CD4-positive, alpha-beta T cell (primary cell): ENCODE measurements at regions of chr20 and their contacts with region 1.

Region 1: GRCh38 chr20:21505161-21505809 is 8.6 kb downstream of the NKX2-2 start:
- DNase-seq: peak; percentile 63 to 87 (median 76)
- ATAC-seq: peak; percentile 75
- H3K4me3 ChIP-seq: peak overlapping the region; percentile 48
- H3K4me3 Mint-ChIP-seq: peak overlapping the region; percentile 82
- H3K27ac ChIP-seq: no peak overlapping the region
- H3K27ac Mint-ChIP-seq: no peak overlapping the region
- H3K4me1 ChIP-seq: peaks cover 31% of the 10 kb centered on the region
- H3K4me1 Mint-ChIP-seq: peaks cover 39% of the 10 kb centered on the region
- H3K27me3 ChIP-seq: peaks cover 54 to 62% of the 10 kb centered on the region in 2 experiments
- H3K27me3 Mint-ChIP-seq: peaks cover 80% of the 10 kb centered on the region
- CTCF ChIP-seq: peak; percentile 94

Region 2: DNA sequence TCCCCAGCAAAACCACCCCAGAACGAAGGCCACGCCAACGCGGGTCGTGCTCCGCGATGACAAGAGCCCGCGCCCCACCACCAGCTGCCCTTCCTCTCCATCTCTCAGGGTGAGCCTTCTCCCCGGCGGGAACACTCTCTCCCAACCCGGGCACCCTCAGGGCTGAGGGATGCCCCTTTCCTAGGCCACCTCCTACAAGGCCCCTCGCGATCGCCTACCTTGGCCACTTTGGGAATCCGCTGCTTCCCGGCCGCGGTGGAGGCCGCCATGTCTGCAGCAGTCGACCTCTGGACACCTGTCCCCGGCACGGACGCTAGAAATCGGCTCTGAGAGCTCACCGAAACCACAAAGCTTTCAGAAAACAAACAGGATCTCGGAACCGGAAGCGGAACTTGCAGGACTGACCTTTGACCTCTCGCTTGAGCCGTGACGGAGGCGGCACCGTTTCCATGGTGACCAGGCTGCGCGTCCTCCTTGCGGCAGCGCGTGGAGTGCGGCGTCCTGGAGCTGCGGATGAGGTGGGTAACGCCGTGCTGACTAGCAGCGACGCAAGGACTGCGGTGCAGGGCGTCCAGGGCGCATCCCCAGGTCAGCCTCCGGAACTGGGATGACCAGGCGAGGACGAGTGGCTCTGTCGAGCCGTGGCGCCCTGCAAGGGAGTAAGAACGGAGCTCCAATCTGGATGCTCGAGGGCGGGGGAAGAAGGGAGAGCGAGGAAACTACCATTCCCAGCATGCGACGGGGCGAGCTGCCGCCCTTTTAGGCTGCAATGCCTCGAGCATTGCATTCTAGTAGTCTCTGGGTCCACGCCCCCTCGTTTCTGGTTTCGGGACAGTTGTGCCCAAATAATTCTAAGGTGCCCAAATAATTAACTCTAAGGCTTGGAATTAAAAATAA is 1453.0 kb before region 1 on chr20 and contains the starts of genes CFAP61 and CRNKL1:
- CTCF ChIA-PET with region 1: no interaction called
- POLR2A ChIA-PET with region 1: no interaction called
- intact Hi-C with region 1: no loop called
- DNase-seq: peak; percentile 94 to 100 (median 97)
- ATAC-seq: peak; percentile 93
- H3K4me3 ChIP-seq: peak within 1 kb of the TSS; percentile 91
- H3K4me3 Mint-ChIP-seq: peak within 1 kb of the TSS; percentile 98
- H3K27ac ChIP-seq: peak within 1 kb of the TSS; percentile 80 to 91
- H3K27ac Mint-ChIP-seq: peak within 1 kb of the TSS; percentile 89
- H3K4me1 ChIP-seq: peaks cover 7% of the 10 kb centered on the region
- H3K4me1 Mint-ChIP-seq: peaks cover 37% of the 10 kb centered on the region
- H3K27me3 ChIP-seq: no peaks in the 10 kb centered on the region
- H3K27me3 Mint-ChIP-seq: peaks cover 6% of the 10 kb centered on the region
- CTCF ChIP-seq: no peak
- total RNA-seq, gene CFAP61: not detected
- total RNA-seq, gene CRNKL1: 24.3 to 26.1 TPM

Region 3: GRCh38 chr20:20083807-20084206 is 1421.5 kb before region 1 on chr20:
- CTCF ChIA-PET with region 1: no interaction called
- POLR2A ChIA-PET with region 1: no interaction called
- intact Hi-C with region 1: loop called in 1 of 2 experiments (anchors 5 kb)
- DNase-seq: peak in 3 of 14 experiments; percentile 20 to 54 (median 52)
- ATAC-seq: peak; percentile 24
- H3K4me3 ChIP-seq: no peak overlapping the region
- H3K4me3 Mint-ChIP-seq: no peak overlapping the region
- H3K27ac ChIP-seq: no peak overlapping the region
- H3K27ac Mint-ChIP-seq: no peak overlapping the region
- H3K4me1 ChIP-seq: no peaks in the 10 kb centered on the region
- H3K4me1 Mint-ChIP-seq: peaks cover 5% of the 10 kb centered on the region
- H3K27me3 ChIP-seq: peaks cover 0 to 5% of the 10 kb centered on the region in 2 experiments
- H3K27me3 Mint-ChIP-seq: peaks cover 19% of the 10 kb centered on the region
- CTCF ChIP-seq: peak; percentile 71

Region 4: DNA sequence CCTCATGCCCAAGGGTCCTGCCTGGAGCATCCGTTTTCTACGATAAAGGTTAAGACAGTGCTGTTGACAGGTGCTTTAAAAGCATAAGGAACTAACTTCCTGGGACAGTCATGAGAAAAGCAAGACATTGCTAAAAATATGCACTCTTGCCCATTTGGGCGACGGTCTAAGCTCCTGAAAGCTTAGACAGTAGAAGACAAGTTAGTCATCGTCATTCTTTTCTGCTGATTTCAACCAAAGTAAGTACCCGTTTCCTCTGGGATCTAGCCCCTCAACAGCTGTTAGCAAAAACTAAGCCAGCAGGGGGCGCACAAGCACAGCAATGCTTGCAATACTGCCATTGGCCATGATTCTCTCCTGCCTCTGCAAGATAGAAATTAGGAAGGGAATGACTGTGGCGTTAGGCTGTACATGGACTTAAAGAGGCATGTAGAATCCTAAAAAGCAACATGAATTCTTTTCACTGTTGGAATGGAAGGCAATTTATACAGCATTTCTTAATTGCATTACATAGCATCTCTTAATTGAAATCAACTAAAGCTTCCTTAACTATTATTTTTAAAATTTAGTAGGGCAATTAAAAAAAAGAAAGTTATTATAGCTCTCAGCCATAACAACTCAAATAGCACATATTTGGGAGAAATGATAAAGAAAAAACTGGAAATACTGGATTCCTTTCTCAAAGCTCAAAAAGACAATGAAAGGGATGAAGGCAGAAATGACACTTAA is 645.0 kb before region 1 on chr20:
- CTCF ChIA-PET with region 1: interaction called, 30 read pairs
- POLR2A ChIA-PET with region 1: interaction called, 3 read pairs
- intact Hi-C with region 1: loop called (anchors 1 kb)
- DNase-seq: peak; percentile 67 to 87 (median 79)
- ATAC-seq: peak; percentile 60
- H3K4me3 ChIP-seq: no peak overlapping the region
- H3K4me3 Mint-ChIP-seq: no peak overlapping the region
- H3K27ac ChIP-seq: no peak overlapping the region
- H3K27ac Mint-ChIP-seq: no peak overlapping the region
- H3K4me1 ChIP-seq: no peaks in the 10 kb centered on the region
- H3K4me1 Mint-ChIP-seq: no peaks in the 10 kb centered on the region
- H3K27me3 ChIP-seq: peaks cover 0 to 8% of the 10 kb centered on the region in 2 experiments
- H3K27me3 Mint-ChIP-seq: peaks cover 18% of the 10 kb centered on the region
- CTCF ChIP-seq: peak; percentile 91

Region 5: GRCh38 chr20:21099751-21100577 is 405.3 kb before region 1 on chr20:
- CTCF ChIA-PET with region 1: no interaction called
- POLR2A ChIA-PET with region 1: no interaction called
- intact Hi-C with region 1: loop called (anchors 5 kb)
- DNase-seq: peak in 7 of 14 experiments; percentile 12 to 72 (median 51)
- ATAC-seq: peak; percentile 45
- H3K4me3 ChIP-seq: peak overlapping the region; percentile 68
- H3K4me3 Mint-ChIP-seq: peak overlapping the region; percentile 84
- H3K27ac ChIP-seq: peak overlapping the region in 1 of 2 donors; percentile 7
- H3K27ac Mint-ChIP-seq: peak overlapping the region; percentile 35
- H3K4me1 ChIP-seq: peaks cover 53% of the 10 kb centered on the region
- H3K4me1 Mint-ChIP-seq: peaks cover 52% of the 10 kb centered on the region
- H3K27me3 ChIP-seq: peaks cover 79 to 93% of the 10 kb centered on the region in 2 experiments
- H3K27me3 Mint-ChIP-seq: peaks cover 94% of the 10 kb centered on the region
- CTCF ChIP-seq: no peak

Region 6: DNA sequence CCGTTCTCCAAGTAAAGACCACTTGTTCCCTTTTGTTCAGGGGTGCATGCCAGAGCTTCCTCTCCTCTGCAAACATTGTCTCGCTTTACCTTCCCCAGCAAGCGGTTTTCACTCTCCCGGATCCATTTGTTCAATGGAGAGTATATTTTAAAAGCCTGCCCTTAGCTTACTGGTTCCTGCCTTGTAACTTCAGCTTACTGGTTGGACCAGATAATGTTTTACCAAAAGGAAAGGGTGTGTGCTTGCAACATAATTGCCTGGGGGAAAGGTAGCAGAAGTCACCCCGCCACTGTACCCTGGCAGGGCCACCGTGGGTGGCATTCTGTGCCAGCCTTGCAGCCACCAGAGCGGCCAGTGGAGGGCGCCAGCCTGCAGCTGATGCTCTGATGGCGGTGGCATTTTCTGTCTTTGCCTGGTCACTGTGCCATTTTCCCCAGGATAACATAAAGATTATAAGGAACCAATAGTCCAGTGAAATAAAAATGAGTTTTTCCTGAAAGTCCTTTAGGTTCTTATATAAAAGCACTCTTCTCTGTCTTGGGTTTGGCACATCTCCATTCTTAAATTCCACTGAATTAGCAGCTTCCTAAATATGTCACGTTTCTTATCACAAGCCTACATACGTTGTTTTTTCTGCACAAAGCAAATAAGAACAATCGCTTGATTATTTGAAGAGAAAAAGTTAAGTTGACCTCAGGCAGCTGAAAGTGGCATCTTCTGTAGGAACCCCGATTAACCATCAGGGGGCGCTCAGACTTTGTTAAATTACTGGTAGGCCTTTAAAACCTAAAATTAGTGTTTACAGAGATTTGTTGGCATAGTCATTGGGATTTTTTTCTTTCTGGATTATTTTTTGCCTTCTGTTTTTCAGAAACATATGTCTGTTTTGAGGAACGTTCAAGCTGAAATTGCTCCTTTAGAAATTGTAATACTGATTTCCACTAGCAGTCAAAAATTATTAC is 269.5 kb before region 1 on chr20:
- CTCF ChIA-PET with region 1: interaction called, 72 read pairs
- POLR2A ChIA-PET with region 1: interaction called, 4 read pairs
- intact Hi-C with region 1: loop called (anchors 1 kb)
- DNase-seq: peak; percentile 35 to 77 (median 54)
- ATAC-seq: peak; percentile 80
- H3K4me3 ChIP-seq: no peak overlapping the region
- H3K4me3 Mint-ChIP-seq: no peak overlapping the region
- H3K27ac ChIP-seq: no peak overlapping the region
- H3K27ac Mint-ChIP-seq: no peak overlapping the region
- H3K4me1 ChIP-seq: peaks cover 2% of the 10 kb centered on the region
- H3K4me1 Mint-ChIP-seq: no peaks in the 10 kb centered on the region
- H3K27me3 ChIP-seq: no peaks in the 10 kb centered on the region
- H3K27me3 Mint-ChIP-seq: no peaks in the 10 kb centered on the region
- CTCF ChIP-seq: peak; percentile 92

Region 7: GRCh38 chr20:21280522-21281016 is 224.7 kb before region 1 on chr20:
- CTCF ChIA-PET with region 1: no interaction called
- POLR2A ChIA-PET with region 1: no interaction called
- intact Hi-C with region 1: no loop called
- DNase-seq: no peak
- ATAC-seq: no peak
- H3K4me3 ChIP-seq: no peak overlapping the region
- H3K4me3 Mint-ChIP-seq: no peak overlapping the region
- H3K27ac ChIP-seq: no peak overlapping the region
- H3K27ac Mint-ChIP-seq: no peak overlapping the region
- H3K4me1 ChIP-seq: no peaks in the 10 kb centered on the region
- H3K4me1 Mint-ChIP-seq: no peaks in the 10 kb centered on the region
- H3K27me3 ChIP-seq: no peaks in the 10 kb centered on the region
- H3K27me3 Mint-ChIP-seq: peaks cover 24% of the 10 kb centered on the region
- CTCF ChIP-seq: no peak

Region 8: DNA sequence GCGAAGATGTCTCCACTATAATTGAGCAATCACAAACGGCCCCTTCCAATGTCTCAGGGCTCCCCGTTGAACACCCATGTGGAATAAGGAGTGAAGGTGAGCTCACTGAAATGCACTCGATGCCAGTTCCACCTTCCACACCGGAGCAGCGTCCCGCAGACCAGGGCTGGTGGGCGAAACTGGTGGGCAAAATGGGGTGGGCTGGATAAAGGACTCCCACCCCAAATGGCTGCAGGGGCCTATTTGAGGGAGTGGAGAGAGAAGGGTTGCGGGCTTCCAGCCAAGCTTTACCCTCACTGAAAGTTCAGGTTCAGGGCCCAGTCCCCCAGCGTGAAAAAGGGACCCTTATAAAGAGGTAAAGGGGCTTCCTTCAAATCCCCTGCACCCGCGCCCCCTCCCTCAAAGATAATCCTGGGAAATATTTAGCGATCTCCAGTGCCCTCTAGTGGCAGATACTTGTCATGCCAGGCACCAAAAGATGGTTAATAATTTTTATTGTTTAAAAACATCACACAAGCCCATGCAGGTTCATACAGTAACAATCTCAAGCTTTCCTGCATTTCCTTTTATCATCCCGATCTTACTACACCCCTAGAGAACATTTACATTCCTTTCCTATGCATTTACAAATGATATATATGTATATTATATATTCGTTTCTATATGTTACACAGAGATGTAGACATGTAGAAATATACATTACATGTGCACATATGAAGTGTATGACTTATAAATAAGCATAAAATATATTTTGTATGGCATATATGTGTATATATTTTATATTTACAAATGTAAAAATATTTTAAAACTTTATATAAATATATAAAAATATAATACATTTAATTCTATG is 66.8 kb after region 1 on chr20:
- CTCF ChIA-PET with region 1: interaction called, 10 read pairs
- POLR2A ChIA-PET with region 1: no interaction called
- intact Hi-C with region 1: loop called in 1 of 2 experiments (anchors 1 kb)
- DNase-seq: peak in 7 of 14 experiments; percentile 3 to 59 (median 15)
- ATAC-seq: no peak
- H3K4me3 ChIP-seq: no peak overlapping the region
- H3K4me3 Mint-ChIP-seq: no peak overlapping the region
- H3K27ac ChIP-seq: no peak overlapping the region
- H3K27ac Mint-ChIP-seq: no peak overlapping the region
- H3K4me1 ChIP-seq: peaks cover 8% of the 10 kb centered on the region
- H3K4me1 Mint-ChIP-seq: no peaks in the 10 kb centered on the region
- H3K27me3 ChIP-seq: no peaks in the 10 kb centered on the region
- H3K27me3 Mint-ChIP-seq: peaks cover 34% of the 10 kb centered on the region
- CTCF ChIP-seq: peak; percentile 86

Region 9: GRCh38 chr20:21725892-21726291 is 220.6 kb after region 1 on chr20:
- CTCF ChIA-PET with region 1: no interaction called
- POLR2A ChIA-PET with region 1: no interaction called
- intact Hi-C with region 1: no loop called
- DNase-seq: no peak
- ATAC-seq: no peak
- H3K4me3 ChIP-seq: no peak overlapping the region
- H3K4me3 Mint-ChIP-seq: no peak overlapping the region
- H3K27ac ChIP-seq: no peak overlapping the region
- H3K27ac Mint-ChIP-seq: no peak overlapping the region
- H3K4me1 ChIP-seq: no peaks in the 10 kb centered on the region
- H3K4me1 Mint-ChIP-seq: no peaks in the 10 kb centered on the region
- H3K27me3 ChIP-seq: peaks cover 0 to 3% of the 10 kb centered on the region in 2 experiments
- H3K27me3 Mint-ChIP-seq: peaks cover 8% of the 10 kb centered on the region
- CTCF ChIP-seq: no peak

Region 10: GRCh38 chr20:21781446-21782075 is 276.3 kb after region 1 on chr20:
- CTCF ChIA-PET with region 1: no interaction called
- POLR2A ChIA-PET with region 1: no interaction called
- intact Hi-C with region 1: no loop called
- DNase-seq: no peak
- ATAC-seq: no peak
- H3K4me3 ChIP-seq: no peak overlapping the region
- H3K4me3 Mint-ChIP-seq: no peak overlapping the region
- H3K27ac ChIP-seq: no peak overlapping the region
- H3K27ac Mint-ChIP-seq: no peak overlapping the region
- H3K4me1 ChIP-seq: no peaks in the 10 kb centered on the region
- H3K4me1 Mint-ChIP-seq: no peaks in the 10 kb centered on the region
- H3K27me3 ChIP-seq: no peaks in the 10 kb centered on the region
- H3K27me3 Mint-ChIP-seq: no peaks in the 10 kb centered on the region
- CTCF ChIP-seq: no peak